Uterus (tissue), 4 donors: ENCODE measurements at regions of chr2 and their contacts with region 1.

Region 1: GRCh38 chr2:64203858-64204632 is 59.8 kb upstream of the PELI1 start:
- DNase-seq: no peak
- H3K4me3 ChIP-seq: no peak overlapping the region
- H3K27ac ChIP-seq: peak overlapping the region; percentile 85 to 91
- H3K4me1 ChIP-seq: peaks cover 10 to 11% of the 10 kb centered on the region in 2 donors
- H3K27me3 ChIP-seq: no peaks in the 10 kb centered on the region
- CTCF ChIP-seq: no peak
- POLR2A ChIP-seq: no peak

Region 2: GRCh38 chr2:64133828-64134227 is 70.2 kb before region 1 on chr2:
- intact Hi-C with region 1: no loop called
- DNase-seq: no peak
- H3K4me3 ChIP-seq: no peak overlapping the region
- H3K27ac ChIP-seq: peak overlapping the region in 1 of 2 donors; percentile 31
- H3K4me1 ChIP-seq: peaks cover 0 to 16% of the 10 kb centered on the region in 2 donors
- H3K27me3 ChIP-seq: no peaks in the 10 kb centered on the region
- CTCF ChIP-seq: no peak
- POLR2A ChIP-seq: no peak

Region 3: DNA sequence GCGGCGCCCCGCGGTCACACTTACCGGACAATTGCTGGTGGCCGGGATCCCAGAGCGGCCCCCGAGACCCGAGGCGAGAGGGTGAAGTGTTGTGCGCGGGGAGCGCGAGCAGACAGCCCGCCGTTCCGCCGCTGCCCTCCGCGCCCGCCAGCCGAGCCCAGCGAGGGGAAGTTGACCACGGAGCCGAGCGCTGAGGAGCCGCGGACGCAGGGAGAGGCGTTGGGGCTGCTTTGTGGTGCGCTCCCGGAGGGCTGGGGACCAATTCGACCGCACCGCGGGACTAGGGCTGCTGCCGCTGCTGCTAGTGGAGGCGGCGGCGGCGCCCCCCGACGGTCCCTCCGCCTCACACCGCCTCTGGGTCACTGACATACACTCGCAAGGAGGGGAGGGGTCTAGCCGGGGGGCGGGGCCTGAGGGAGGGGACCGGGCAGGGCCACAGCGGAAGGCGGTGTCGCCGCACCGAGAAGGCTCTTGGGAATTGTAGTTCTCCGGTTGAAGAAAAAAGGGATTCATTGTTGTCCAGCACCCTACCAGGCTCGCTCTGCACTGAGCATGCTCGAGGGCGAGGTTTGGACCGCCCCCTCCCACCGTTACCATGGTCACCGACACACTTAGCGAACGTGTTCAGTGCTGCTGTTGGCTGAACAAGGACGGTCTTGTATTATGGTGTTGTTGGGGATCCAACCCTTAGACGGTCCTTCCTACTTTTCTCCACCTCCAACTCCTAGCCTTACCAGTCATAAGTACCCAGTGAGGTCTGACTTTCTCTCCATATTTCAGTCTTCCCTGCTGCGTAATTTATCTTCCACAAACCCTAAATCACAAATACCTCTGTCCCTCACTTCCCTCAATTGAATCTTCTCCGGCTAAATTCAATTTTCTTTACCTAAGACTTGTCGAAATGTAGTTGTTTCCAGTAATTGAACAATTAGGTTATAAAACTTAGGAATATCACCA is 59.7 kb before region 1 on chr2 and contains the start of gene PELI1:
- intact Hi-C with region 1: loop called (anchors 10 kb)
- DNase-seq: peak; percentile 95 to 97
- H3K4me3 ChIP-seq: peak within 1 kb of the TSS; percentile 73 to 99
- H3K27ac ChIP-seq: peak within 1 kb of the TSS; percentile 94 to 99
- H3K4me1 ChIP-seq: peaks cover 2 to 9% of the 10 kb centered on the region in 2 donors
- H3K27me3 ChIP-seq: no peaks in the 10 kb centered on the region
- CTCF ChIP-seq: peak in 2 of 4 experiments; percentile 17 to 30
- POLR2A ChIP-seq: peak; percentile 98 to 99
- total RNA-seq, gene PELI1: 26.2 to 54.7 (median 37.4) TPM